ENCODE measurements at regions of chr6 and their contacts with region 1.

Region 1: GRCh38 chr6:34585512-34586061 is 29.5 kb upstream of the SPDEF start:
- DNase-seq: peak; percentile 20
- H3K4me3 ChIP-seq: no peak overlapping the region
- CTCF ChIP-seq: no peak

Region 2: GRCh38 chr6:34189806-34190503 is 395.6 kb before region 1 on chr6:
- in situ Hi-C with region 1: no loop called
- DNase-seq: no peak
- H3K4me3 ChIP-seq: no peak overlapping the region
- CTCF ChIP-seq: no peak

Region 3: GRCh38 chr6:34531580-34532201 is 53.9 kb before region 1 on chr6:
- in situ Hi-C with region 1: loop called (anchors 5 kb)
- DNase-seq: peak; percentile 42
- H3K4me3 ChIP-seq: peak overlapping the region; percentile 21
- CTCF ChIP-seq: no peak